ENCODE measurements at regions of chr7 and their contacts with region 1.

Region 1: DNA sequence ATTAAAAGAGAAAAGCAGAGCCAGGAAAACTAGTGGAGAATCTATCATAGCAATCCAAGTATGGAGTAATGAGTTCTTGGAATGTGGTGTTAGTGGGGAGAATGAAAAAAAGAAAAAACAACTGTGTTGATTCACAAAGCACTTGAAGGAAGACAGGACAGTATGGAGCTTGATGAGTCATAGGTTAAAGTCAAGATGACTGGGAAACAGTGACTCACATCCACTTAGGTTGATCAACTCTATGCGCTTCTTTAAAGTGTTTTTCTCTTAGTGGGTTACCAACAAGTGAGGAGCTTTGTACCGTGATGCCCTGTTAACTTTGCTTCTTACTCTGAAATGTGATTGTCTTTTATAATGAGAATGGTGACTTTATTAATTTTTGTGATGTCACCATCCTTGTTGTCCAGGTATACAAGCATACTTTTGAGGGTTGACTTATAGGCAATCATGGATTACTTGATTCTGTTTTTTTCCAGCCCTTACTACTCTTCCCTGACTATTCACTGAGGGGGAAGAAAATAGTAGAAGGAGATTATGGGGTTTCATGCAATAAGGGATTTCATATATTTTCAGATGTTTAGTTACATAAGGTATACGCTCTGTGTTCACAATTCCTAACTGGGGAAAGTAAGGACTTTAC is 32.1 kb upstream of the MDFIC start:
- DNase-seq: peak; percentile 14
- ATAC-seq: peak; percentile 99
- H3K4me3 Mint-ChIP-seq: no peak overlapping the region
- H3K27ac Mint-ChIP-seq: peak overlapping the region; percentile 75
- H3K4me1 Mint-ChIP-seq: peaks cover 44% of the 10 kb centered on the region
- H3K27me3 Mint-ChIP-seq: no peaks in the 10 kb centered on the region

Region 2: GRCh38 chr7:114916261-114916892 is 26.6 kb after region 1 on chr7:
- CTCF ChIA-PET with region 1: interaction called, 3 read pairs
- POLR2A ChIA-PET with region 1: no interaction called
- intact Hi-C with region 1: loop called (anchors 1 kb)
- DNase-seq: peak; percentile 74
- ATAC-seq: peak; percentile 91
- H3K4me3 Mint-ChIP-seq: peak overlapping the region; percentile 44
- H3K27ac Mint-ChIP-seq: peak overlapping the region; percentile 94
- H3K4me1 Mint-ChIP-seq: peaks cover 59% of the 10 kb centered on the region
- H3K27me3 Mint-ChIP-seq: no peaks in the 10 kb centered on the region

Region 3: GRCh38 chr7:115332691-115333090 is 442.9 kb after region 1 on chr7:
- CTCF ChIA-PET with region 1: no interaction called
- POLR2A ChIA-PET with region 1: no interaction called
- intact Hi-C with region 1: no loop called
- DNase-seq: no peak
- ATAC-seq: no peak
- H3K4me3 Mint-ChIP-seq: no peak overlapping the region
- H3K27ac Mint-ChIP-seq: no peak overlapping the region
- H3K4me1 Mint-ChIP-seq: no peaks in the 10 kb centered on the region
- H3K27me3 Mint-ChIP-seq: peaks cover 2% of the 10 kb centered on the region

Measured in activated CD4-positive, alpha-beta T cell treated with anti-CD3 and anti-CD28 coated beads for 36 hours (primary cell).